PC-3 (cell line): ENCODE measurements at regions of chr4 and their contacts with region 1.

Region 1: DNA sequence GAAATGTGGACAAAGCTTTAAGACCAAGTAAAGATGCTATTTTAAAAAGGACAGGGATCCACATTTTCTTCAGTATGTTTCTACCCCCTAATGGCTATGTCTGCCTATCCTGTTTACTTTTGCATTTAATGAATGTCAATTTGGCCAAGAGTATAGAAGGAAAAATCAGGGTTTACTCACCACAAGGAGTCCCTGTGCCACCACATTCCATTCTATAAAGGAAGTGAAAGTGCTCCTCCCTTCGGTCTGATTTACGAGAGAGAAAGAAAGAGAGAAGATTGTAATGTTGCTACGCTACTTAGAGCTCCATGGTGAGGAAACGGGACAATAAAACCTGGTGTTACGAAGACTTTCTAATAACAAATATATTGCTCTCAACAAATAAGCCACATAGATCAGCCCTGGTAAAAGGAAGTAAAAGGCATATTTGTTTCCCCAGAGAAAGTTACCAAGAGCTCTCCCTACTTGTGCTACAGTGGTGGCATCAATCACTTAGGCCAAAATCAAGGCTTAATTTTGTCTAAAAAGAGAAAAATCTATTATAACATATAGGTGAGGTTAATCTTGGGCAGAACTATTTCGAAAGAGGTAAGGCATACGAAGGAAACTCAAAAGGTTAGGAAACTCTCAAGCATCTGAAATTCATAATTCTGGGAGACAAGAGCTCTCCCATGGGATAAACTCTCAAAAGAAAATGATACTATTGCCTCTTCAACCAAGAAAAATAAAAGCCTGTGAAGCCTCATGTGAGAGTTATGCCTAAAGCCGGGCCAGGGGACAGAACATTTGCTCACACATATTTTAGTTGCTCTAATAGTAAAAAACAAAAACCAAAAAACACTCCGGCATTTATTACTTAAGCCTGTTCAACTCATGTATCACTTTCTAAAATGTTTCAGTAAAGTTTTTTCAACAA is 29.5 kb downstream of the TAPT1 start:
- DNase-seq: peak; percentile 86
- ATAC-seq: peak; percentile 97
- H3K4me3 ChIP-seq: peak overlapping the region; percentile 62
- H3K27ac ChIP-seq: peak overlapping the region; percentile 39; the same call in 1 of the 2 replicates
- H3K4me1 ChIP-seq: peaks cover 8% of the 10 kb centered on the region
- H3K27me3 ChIP-seq: no peaks in the 10 kb centered on the region
- CTCF ChIP-seq: peak; percentile 68

Region 2: DNA sequence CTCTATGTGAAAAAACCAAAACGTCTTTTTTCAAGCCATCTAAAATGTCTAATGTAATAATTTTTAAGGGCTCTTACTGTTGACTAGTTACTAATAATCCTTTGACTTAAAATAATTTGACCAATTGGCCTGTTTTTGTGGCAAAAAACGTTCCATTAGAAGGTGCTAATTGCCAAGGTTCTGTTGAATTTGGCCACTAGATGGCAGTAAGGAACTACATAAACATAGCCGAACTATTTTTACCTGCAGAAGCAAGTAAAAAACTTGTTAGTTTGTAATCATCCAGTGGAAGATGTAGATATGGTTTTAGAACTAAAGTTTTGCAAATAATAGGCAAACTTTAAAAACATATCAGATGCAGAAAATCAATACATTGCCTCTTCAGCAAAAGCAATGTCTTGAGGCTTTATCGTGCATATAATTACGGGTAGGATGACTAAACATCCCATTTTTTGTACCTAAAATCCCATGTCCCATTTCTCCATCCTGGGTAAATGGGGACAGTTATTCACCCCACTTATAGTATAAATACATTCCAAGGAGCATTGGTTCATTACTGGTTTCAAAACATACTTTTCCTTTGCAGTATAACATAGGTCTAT is 170.5 kb before region 1 on chr4:
- CTCF ChIA-PET with region 1: interaction called, 4 read pairs
- POLR2A ChIA-PET with region 1: no interaction called
- intact Hi-C with region 1: loop called (anchors 1 kb)
- DNase-seq: peak; percentile 78
- ATAC-seq: peak; percentile 20; the same call in 1 of the 2 replicates
- H3K4me3 ChIP-seq: no peak overlapping the region
- H3K27ac ChIP-seq: no peak overlapping the region
- H3K4me1 ChIP-seq: peaks cover 36% of the 10 kb centered on the region
- H3K27me3 ChIP-seq: no peaks in the 10 kb centered on the region
- CTCF ChIP-seq: peak; percentile 91

Region 3: DNA sequence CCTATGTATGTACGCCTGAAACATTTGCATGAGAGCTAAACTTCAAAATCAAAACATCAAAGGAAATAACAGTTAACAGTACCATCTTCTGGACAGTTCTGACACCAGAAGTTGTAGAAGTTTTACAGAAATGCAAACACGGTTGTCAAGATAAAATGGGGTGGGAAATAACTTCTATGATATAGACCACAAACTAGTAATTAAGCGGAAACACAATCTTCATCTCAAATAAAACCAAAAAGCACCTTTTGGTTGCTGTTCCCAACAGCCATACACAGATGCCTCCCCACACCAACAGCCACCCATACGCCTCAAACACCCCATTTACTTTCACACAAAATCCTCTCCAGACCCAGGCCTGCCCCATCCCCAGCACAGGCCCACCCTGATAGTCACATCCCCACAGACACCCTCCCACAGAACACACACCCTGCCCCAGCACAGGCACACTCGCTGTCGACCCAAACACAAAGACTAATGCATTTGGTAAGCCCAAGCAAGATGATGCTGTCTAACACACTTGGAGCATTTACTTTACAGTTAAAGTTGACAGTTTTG is 34.8 kb before region 1 on chr4:
- CTCF ChIA-PET with region 1: no interaction called
- POLR2A ChIA-PET with region 1: no interaction called
- intact Hi-C with region 1: loop called (anchors 5 kb)
- DNase-seq: no peak
- ATAC-seq: no peak
- H3K4me3 ChIP-seq: no peak overlapping the region
- H3K27ac ChIP-seq: no peak overlapping the region
- H3K4me1 ChIP-seq: no peaks in the 10 kb centered on the region
- H3K27me3 ChIP-seq: no peaks in the 10 kb centered on the region
- CTCF ChIP-seq: no peak

Region 4: GRCh38 chr4:16315456-16315855 is 118.7 kb after region 1 on chr4:
- CTCF ChIA-PET with region 1: no interaction called
- POLR2A ChIA-PET with region 1: no interaction called
- intact Hi-C with region 1: no loop called
- DNase-seq: no peak
- ATAC-seq: no peak
- H3K4me3 ChIP-seq: no peak overlapping the region
- H3K27ac ChIP-seq: no peak overlapping the region
- H3K4me1 ChIP-seq: no peaks in the 10 kb centered on the region
- H3K27me3 ChIP-seq: no peaks in the 10 kb centered on the region
- CTCF ChIP-seq: no peak